CD8-positive, alpha-beta T cell (primary cell): ENCODE measurements at regions of chr7 and their contacts with region 1.

Region 1: GRCh38 chr7:35816514-35816913 is 15.7 kb downstream of the SEPTIN7 start:
- DNase-seq: no peak
- ATAC-seq: no peak
- H3K4me3 ChIP-seq: no peak overlapping the region
- H3K4me3 Mint-ChIP-seq: peak overlapping the region; percentile 26
- H3K27ac ChIP-seq: no peak overlapping the region
- H3K27ac Mint-ChIP-seq: no peak overlapping the region
- H3K4me1 ChIP-seq: peaks cover 14% of the 10 kb centered on the region
- H3K4me1 Mint-ChIP-seq: peaks cover 81% of the 10 kb centered on the region
- H3K27me3 ChIP-seq: no peaks in the 10 kb centered on the region
- H3K27me3 Mint-ChIP-seq: no peaks in the 10 kb centered on the region
- CTCF ChIP-seq: no peak

Region 2: GRCh38 chr7:35761871-35762677 is 54.4 kb before region 1 on chr7:
- CTCF ChIA-PET with region 1: no interaction called
- POLR2A ChIA-PET with region 1: no interaction called
- intact Hi-C with region 1: no loop called
- DNase-seq: no peak
- ATAC-seq: no peak
- H3K4me3 ChIP-seq: no peak overlapping the region
- H3K4me3 Mint-ChIP-seq: no peak overlapping the region
- H3K27ac ChIP-seq: no peak overlapping the region
- H3K27ac Mint-ChIP-seq: no peak overlapping the region
- H3K4me1 ChIP-seq: peaks cover 9% of the 10 kb centered on the region
- H3K4me1 Mint-ChIP-seq: peaks cover 12% of the 10 kb centered on the region
- H3K27me3 ChIP-seq: no peaks in the 10 kb centered on the region
- H3K27me3 Mint-ChIP-seq: no peaks in the 10 kb centered on the region
- CTCF ChIP-seq: no peak

Region 3: DNA sequence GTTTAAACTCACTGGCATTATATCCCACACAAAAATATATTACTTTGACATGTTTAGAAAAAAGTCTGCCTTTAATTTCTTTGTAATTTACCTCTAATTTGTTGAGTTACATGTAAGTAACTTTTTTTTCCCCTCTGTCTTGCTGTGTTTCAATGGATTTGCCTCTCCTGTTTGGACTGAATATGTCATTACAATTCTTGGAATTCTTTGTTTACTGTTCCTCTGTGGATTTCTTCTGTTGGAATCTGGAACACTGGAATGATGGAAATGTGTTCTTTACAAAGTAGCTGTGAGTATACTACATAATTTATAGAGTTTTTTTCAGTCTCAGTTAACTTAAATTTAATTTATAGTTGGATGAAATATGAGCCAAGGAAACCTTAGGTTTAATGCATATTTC is 14.7 kb after region 1 on chr7:
- CTCF ChIA-PET with region 1: no interaction called
- POLR2A ChIA-PET with region 1: no interaction called
- intact Hi-C with region 1: loop called in 1 of 2 experiments (anchors 2 kb)
- DNase-seq: no peak
- ATAC-seq: no peak
- H3K4me3 ChIP-seq: no peak overlapping the region
- H3K4me3 Mint-ChIP-seq: no peak overlapping the region
- H3K27ac ChIP-seq: no peak overlapping the region
- H3K27ac Mint-ChIP-seq: no peak overlapping the region
- H3K4me1 ChIP-seq: peaks cover 28% of the 10 kb centered on the region
- H3K4me1 Mint-ChIP-seq: peaks cover 74% of the 10 kb centered on the region
- H3K27me3 ChIP-seq: no peaks in the 10 kb centered on the region
- H3K27me3 Mint-ChIP-seq: no peaks in the 10 kb centered on the region
- CTCF ChIP-seq: no peak

Region 4: GRCh38 chr7:37476881-37477450 is 1660.5 kb after region 1 on chr7:
- CTCF ChIA-PET with region 1: no interaction called
- POLR2A ChIA-PET with region 1: no interaction called
- intact Hi-C with region 1: loop called in 1 of 2 experiments (anchors 10 kb)
- DNase-seq: no peak
- ATAC-seq: no peak
- H3K4me3 ChIP-seq: no peak overlapping the region
- H3K4me3 Mint-ChIP-seq: no peak overlapping the region
- H3K27ac ChIP-seq: no peak overlapping the region
- H3K27ac Mint-ChIP-seq: no peak overlapping the region
- H3K4me1 ChIP-seq: no peaks in the 10 kb centered on the region
- H3K4me1 Mint-ChIP-seq: no peaks in the 10 kb centered on the region
- H3K27me3 ChIP-seq: peaks cover 0 to 2% of the 10 kb centered on the region in 2 experiments
- H3K27me3 Mint-ChIP-seq: peaks cover 18% of the 10 kb centered on the region
- CTCF ChIP-seq: no peak